Activated CD8-positive, alpha-beta memory T cell treated with anti-CD3 and anti-CD28 coated beads, Interleukin-2, amount 10 ng/mL, durations not matched to agents 7 days and 5 days (primary cell): ENCODE measurements at regions of chr1 and their contacts with region 1.

Region 1: DNA sequence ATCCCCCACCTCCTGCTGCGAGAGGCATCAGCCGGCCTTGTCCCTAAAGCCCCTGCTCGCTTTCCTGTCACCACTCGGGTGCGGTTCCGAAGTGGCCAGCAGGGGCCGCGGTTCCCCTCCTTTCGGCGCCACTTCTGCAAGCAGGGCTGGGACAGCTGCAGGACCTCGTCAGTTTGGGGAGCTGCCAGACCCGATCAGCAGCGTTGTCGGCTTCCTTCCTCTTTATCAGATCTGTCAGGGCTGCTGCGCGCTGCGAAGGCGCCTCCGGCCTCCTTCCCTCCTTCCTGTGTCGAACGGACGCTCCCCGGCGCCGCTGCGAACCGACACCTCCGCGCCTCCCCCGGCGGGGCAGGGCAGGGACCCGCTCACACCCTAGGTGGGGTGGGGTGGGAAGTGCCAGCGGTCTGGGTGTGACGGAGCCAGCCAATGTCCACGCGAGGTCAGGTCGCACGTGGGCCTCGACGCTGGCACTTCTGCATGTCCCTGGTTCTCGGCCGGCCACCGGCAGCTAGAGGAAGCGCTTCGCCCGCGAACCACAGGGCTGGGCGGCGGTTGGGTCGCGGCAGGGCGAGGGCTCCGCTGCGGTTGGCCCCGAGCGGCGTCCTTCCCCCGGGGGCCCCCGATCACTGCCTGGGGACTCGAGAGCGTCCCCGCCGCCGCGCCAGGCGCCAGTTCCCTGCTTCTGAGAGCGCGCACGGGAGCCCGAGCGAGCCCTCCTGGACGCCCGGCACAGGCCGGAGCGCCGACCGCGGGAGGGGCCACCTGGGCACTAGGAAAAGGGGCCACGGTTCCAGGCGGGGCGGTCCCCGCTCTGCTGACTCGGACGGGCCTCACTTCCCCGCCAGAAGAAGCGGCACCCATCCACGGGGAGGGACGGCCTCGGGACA is 81.8 kb downstream of the RUNX3 start:
- DNase-seq: peak; percentile 96
- ATAC-seq: peak; percentile 98
- H3K4me3 Mint-ChIP-seq: peak overlapping the region; percentile 54
- H3K27ac Mint-ChIP-seq: peak overlapping the region; percentile 66
- H3K4me1 Mint-ChIP-seq: peaks cover 24% of the 10 kb centered on the region
- H3K27me3 Mint-ChIP-seq: peaks cover 56% of the 10 kb centered on the region

Region 2: DNA sequence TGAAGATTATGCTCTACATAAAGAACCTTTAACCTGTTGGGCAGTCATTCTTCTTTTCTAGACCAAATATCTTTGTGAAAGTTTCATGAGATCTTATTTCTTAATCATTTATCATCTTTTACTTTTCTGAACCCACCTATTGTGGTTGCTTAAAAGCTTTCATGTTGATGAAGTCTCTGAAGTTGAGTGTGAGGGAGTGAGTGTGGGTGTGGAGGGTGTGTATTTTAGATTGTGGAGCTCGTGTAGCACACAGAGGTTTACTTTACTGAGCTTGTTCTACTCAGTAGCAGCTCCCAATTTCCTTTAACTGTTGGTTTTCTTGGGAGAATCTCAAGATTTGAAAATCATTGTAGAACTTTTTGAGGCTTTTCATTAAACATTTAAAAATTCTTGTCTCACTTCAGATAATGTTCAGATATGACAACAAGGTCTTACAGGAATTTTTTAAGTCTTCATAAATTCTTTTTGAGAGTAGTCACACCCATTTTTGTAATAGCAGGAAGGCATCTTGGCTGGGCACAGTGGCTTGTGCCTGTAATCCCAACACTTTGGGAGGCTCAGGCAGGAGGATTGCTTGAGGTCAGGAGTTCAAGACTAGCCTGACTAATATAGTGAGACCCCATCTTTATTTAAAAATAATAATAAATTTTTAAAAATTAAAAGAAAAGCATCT is 188.1 kb before region 1 on chr1:
- CTCF ChIA-PET with region 1: no interaction called
- DNase-seq: no peak
- ATAC-seq: no peak
- H3K4me3 Mint-ChIP-seq: no peak overlapping the region
- H3K27ac Mint-ChIP-seq: peak overlapping the region; percentile 69
- H3K4me1 Mint-ChIP-seq: peaks cover 16% of the 10 kb centered on the region
- H3K27me3 Mint-ChIP-seq: no peaks in the 10 kb centered on the region

Region 3: DNA sequence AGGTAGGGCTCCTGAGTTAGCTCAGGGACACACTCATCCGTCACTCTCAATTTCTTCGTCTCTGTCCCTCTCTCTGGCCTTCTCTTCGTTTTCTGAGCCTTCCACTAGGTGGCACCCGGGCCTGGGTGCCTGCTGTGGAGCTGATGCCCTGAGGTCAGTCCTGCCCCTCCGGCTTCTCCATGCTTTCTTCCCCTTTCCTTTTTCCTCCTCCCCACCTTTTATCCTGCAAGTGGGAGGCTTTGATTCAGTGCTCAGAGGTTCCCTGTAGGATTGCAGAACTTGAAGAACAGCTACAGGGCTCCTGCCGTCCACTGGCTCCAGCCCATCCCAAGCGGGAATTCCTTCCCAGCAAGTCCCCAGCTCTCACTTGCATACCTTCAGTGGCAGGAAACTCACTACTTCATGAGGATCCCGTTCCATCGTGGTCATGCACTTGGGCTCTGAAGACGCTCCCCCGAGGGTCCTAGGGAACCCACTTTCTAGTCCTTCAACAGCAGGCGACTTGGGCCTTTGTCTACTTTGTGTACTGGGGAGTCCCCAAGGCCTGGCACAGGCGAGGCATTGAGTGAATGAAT is 159.5 kb before region 1 on chr1:
- CTCF ChIA-PET with region 1: interaction called, 10 read pairs
- DNase-seq: peak; percentile 74
- ATAC-seq: peak; percentile 86
- H3K4me3 Mint-ChIP-seq: no peak overlapping the region
- H3K27ac Mint-ChIP-seq: no peak overlapping the region
- H3K4me1 Mint-ChIP-seq: peaks cover under 1% of the 10 kb centered on the region
- H3K27me3 Mint-ChIP-seq: peaks cover 6% of the 10 kb centered on the region

Region 4: DNA sequence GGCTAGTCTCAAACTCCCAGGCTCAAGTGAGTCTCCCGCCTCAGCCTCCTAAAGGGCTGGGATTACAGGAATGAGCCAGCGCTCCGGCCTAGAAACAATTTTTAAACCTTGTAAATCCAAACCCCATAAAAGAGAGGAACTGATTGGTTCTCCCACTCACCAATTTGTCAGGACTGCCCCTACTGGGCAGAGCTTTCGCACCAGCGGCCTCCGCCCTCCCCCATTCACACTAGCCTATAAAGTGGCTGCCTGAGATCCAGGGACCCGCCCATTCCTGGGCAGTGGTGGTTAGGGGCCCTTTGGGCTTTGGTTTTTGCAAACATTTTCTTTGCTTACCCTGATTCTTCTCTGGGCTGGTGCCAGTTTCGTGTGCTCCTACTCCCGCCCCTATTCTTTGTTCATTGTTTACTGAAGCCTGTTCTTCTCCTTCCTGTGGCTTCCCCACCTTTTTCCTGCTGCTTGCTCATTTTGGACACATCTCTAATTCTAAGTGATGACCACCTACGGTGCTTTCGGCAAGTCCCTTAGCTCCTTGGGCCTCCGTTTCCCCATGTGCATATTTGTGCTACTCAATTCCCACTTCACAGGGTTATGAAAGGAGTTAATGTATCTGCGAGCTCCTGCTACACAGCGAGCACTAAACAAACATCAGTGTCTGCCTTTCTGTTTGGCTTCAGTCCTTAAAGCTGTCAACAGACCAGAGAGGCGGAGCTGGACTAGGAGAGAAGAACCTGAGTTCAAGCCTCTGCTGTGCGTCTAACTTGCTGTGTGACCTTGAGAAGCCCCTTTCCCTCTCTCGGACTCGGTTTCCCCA is 142.8 kb before region 1 on chr1:
- CTCF ChIA-PET with region 1: no interaction called
- DNase-seq: no peak
- ATAC-seq: no peak
- H3K4me3 Mint-ChIP-seq: no peak overlapping the region
- H3K27ac Mint-ChIP-seq: no peak overlapping the region
- H3K4me1 Mint-ChIP-seq: peaks cover 22% of the 10 kb centered on the region
- H3K27me3 Mint-ChIP-seq: peaks cover 2% of the 10 kb centered on the region

Region 5: DNA sequence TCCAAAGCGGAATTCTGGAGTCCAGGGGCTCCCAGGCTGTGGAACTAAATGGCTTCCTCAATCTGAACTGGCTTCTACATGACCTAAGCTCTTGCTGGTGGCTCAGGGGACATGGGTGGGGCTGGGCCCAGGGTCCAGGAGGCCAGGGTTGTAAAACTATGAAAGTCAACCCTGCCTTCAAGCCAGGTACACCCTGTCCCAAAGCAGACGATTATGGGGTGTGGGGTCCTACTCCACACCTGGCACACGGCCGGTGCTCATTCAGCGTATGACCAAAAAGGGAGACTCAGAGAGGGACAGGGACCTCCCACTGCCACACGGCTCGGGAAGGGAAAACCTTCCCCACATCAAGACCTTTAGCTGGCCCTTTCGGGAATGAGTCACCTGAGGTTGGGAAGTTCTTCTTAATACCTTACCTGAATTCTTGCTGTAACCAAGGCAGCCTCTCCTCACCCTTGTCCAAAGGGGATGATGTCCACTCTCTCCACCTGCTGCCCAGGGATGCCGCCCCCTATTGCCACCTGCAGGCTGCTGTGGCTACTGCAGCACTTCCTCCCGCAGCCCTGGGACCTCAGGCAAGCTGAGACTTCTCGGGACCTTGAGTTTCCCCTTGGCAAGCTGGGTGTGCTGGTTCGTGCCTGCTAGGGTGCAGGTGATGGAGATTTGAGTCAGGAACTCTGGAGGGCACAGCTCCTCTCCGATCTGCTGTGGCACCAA is 49.7 kb after region 1 on chr1:
- CTCF ChIA-PET with region 1: interaction called, 17 read pairs
- DNase-seq: peak; percentile 77
- ATAC-seq: peak; percentile 59
- H3K4me3 Mint-ChIP-seq: no peak overlapping the region
- H3K27ac Mint-ChIP-seq: peak overlapping the region; percentile 75
- H3K4me1 Mint-ChIP-seq: peaks cover 25% of the 10 kb centered on the region
- H3K27me3 Mint-ChIP-seq: no peaks in the 10 kb centered on the region

Region 6: DNA sequence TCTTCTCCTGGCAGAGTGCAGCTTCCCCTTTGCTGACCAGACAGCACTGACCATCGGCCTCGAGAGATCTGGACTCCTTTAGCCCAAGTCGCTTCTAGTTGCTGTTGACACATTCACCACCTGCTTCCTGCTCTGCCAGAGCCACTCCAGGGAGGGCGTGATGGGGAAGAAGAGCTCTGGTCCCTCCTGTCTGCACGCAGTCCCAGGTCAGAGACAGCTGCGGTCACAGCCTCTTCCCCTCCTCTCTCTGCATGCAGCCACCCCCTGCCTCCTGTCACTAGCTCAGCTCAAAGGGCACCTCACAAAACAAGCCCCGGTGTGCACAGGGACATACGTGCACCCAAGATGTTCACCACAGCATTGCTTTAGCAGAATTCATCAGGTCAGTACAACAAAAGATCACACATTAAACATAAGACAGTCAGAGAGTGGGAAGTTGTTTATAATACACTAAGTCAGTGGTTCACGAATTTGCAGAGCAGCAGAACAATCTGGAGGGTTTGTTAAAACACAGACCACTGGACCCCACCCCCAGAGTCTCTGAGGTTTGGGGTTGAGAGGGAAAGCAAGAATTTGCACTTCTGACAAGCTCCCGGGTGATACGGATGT is 251.2 kb after region 1 on chr1:
- CTCF ChIA-PET with region 1: interaction called, 65 read pairs
- DNase-seq: peak; percentile 92
- ATAC-seq: peak; percentile 60
- H3K4me3 Mint-ChIP-seq: peak overlapping the region; percentile 65
- H3K27ac Mint-ChIP-seq: peak overlapping the region; percentile 81
- H3K4me1 Mint-ChIP-seq: peaks cover 73% of the 10 kb centered on the region
- H3K27me3 Mint-ChIP-seq: peaks cover 27% of the 10 kb centered on the region

Region 7: DNA sequence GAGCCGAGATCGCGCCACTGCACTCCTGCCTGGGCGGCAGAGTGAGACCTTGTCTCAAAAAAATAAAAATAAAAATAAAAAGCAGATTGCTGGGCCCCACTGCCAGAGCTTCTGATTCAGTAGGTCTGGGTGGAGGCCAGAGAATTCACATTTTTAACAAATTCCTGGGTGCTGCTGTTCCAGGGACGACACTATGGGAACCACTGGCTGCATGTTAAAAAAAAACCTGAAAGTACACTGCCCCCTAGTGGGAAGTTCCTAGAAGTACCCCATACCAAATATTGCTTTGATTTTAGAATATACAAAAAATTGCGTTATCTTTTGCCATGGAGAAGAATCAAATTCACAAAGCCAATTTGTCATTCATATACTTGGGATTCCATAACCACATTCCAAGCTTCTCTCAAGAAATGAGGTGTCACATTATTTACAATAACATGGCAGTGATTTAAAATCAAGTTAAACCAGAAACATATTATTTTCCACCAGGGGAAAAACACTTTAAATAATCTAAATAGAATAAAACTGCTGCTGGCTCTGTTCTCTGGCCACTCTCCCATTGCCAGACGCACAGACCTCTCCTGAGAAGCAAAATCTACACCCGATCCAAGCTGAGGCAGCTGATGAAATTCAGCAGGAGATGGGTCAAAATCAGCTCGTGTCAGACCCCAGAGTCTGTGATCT is 356.7 kb after region 1 on chr1:
- CTCF ChIA-PET with region 1: interaction called, 65 read pairs
- DNase-seq: no peak
- ATAC-seq: no peak
- H3K4me3 Mint-ChIP-seq: no peak overlapping the region
- H3K27ac Mint-ChIP-seq: no peak overlapping the region
- H3K4me1 Mint-ChIP-seq: no peaks in the 10 kb centered on the region
- H3K27me3 Mint-ChIP-seq: peaks cover 45% of the 10 kb centered on the region